Posterior vena cava (tissue), 2 donors: ENCODE measurements at regions of chr3 and their contacts with region 1.

Region 1: GRCh38 chr3:105366326-105367062 is at the start of gene ALCAM:
- DNase-seq: peak; percentile 98
- total RNA-seq, gene ALCAM: 26.5 to 57.2 TPM

Region 2: DNA sequence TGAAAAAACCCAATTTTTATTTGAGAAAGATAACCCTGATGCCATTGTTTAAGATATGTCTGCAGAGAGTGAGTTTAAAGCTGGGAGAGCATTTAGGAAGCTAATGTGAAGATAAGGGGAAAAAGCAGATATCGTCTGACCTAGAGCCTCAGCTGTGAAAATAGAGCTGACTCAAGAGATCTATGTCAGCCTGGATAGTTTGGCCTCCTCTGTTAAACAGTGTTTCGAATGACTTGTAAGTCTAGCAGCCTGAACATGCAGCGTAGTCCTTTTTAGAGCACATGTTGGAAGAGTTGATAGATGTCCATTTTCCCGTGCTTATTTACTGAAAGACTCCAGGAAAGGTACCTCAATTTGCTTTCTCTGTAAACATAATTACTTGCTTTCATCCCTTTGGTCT is 48.3 kb after region 1 on chr3:
- intact Hi-C with region 1: no loop called
- DNase-seq: no peak

Region 3: DNA sequence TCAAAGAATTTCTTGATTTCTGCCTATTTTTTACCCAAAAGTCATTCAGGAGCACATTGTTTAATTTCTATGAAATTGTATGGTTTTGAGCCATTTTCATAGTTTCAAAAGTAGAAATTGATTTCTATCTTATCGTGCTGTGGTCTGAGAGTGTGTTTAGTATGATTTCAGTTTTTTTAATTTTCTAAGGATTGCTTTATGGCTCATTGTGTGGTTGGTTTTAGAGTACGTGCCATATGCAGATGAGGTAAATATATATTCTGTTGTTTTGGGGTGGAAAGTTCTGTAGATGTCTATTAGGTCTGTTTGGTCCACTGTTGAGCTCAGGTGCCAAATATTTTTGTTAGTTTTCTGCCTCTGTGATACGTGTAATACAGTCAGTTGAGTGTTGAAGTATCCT is 989.4 kb after region 1 on chr3:
- intact Hi-C with region 1: loop called in 1 of 2 experiments (anchors 10 kb)
- DNase-seq: no peak